Activated CD4-positive, alpha-beta T cell treated with anti-CD3 and anti-CD28 coated beads for 36 hours (primary cell): ENCODE measurements at regions of chr16 and their contacts with region 1.

Region 1: DNA sequence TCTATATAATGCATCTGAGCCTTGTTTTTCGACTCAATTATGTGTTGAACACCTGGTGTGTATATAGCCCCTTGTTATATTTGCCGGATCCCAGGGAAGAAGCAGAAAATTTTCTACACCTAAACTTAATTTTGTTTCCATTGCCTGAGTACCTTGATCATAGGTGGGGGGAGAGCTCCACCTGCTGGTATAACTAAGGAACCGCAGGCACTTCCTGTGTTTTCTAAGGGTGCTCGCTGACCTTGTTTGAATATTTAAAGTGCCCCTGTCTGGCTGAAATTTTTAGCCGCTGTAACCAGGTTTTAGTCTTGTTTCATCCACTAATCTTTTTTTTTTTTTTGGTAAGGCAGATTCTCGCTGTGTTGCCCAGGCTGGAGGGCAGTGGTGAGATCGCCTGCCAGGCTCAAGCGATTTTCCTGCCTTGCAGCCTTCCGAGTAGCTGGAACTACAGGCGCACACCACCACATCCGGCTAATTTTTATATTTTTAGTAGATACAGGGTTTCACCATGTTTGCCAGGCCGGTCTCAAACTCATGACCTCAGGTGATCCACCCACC is 6.5 kb upstream of the NUBP1 start:
- DNase-seq: peak; percentile 77
- ATAC-seq: peak; percentile 46
- H3K4me3 Mint-ChIP-seq: peak overlapping the region; percentile 36
- H3K27ac Mint-ChIP-seq: no peak overlapping the region
- H3K4me1 Mint-ChIP-seq: peaks cover 29% of the 10 kb centered on the region
- H3K27me3 Mint-ChIP-seq: no peaks in the 10 kb centered on the region

Region 2: DNA sequence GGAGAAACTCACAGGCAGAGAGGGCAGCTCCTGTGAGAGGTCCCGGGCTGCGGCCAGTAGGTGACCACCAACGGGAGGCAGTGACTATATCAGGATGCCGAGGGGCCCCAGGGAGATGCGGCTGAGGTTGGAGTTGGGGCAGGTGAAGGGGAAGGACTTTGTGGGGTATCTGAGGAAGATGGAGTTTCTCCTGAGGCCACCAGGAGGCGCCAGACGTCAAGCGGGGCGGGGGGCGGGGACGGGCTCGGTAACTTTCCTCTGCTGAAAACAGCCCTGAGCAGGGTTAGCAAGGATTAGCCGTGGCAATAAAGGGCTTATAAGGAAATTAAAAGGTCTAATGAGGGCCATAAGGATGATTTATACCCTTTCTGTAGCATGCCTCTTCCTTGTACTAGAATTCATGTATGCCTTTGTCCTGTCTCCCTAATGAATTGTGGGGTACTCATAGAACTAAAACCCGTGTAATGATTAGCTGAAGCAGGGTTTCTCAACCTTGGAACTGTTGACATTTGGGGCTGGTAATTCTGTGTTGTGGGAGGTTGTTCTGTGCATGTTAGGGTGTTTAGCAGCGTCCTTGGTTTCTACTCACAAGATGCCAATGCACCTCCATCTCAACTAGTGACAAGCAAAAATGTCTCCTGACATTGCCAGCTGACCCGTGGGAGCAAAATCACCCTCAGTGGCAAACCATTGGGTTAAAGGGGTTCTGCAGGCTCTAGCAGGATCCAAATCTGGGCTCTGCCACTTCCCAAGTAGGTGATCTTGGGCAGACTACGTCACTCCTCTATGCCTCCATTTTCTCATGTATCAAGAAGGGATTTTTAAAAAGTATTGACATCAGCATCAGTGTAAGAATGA is 480.1 kb before region 1 on chr16:
- CTCF ChIA-PET with region 1: no interaction called
- POLR2A ChIA-PET with region 1: no interaction called
- intact Hi-C with region 1: loop called (anchors 1 to 2 kb)
- DNase-seq: peak; percentile 66
- ATAC-seq: peak; percentile 63
- H3K4me3 Mint-ChIP-seq: no peak overlapping the region
- H3K27ac Mint-ChIP-seq: no peak overlapping the region
- H3K4me1 Mint-ChIP-seq: peaks cover 5% of the 10 kb centered on the region
- H3K27me3 Mint-ChIP-seq: no peaks in the 10 kb centered on the region

Region 3: DNA sequence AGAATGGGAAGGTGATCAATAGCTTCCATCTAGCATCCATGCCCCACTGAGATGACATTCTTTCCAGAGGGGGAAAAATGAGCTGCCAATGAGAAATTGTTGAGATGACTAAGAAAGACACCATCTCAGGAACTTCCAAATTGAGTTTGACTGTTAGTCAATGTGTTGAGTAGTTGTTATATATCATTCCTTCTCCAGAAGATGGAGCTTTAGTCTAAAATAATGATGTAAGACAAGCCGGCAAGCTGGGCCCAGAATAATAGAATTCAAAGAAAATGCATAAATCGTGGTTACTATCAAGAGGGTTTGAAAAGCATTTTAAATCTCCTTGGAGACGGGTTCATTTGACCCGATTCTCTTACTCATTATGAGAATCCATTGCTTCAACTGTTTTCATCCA is 422.3 kb before region 1 on chr16:
- CTCF ChIA-PET with region 1: interaction called, 3 read pairs
- POLR2A ChIA-PET with region 1: no interaction called
- intact Hi-C with region 1: loop called (anchors 2 to 10 kb)
- DNase-seq: peak; percentile 8
- ATAC-seq: peak; percentile 69
- H3K4me3 Mint-ChIP-seq: no peak overlapping the region
- H3K27ac Mint-ChIP-seq: no peak overlapping the region
- H3K4me1 Mint-ChIP-seq: peaks cover 12% of the 10 kb centered on the region
- H3K27me3 Mint-ChIP-seq: no peaks in the 10 kb centered on the region

Region 4: DNA sequence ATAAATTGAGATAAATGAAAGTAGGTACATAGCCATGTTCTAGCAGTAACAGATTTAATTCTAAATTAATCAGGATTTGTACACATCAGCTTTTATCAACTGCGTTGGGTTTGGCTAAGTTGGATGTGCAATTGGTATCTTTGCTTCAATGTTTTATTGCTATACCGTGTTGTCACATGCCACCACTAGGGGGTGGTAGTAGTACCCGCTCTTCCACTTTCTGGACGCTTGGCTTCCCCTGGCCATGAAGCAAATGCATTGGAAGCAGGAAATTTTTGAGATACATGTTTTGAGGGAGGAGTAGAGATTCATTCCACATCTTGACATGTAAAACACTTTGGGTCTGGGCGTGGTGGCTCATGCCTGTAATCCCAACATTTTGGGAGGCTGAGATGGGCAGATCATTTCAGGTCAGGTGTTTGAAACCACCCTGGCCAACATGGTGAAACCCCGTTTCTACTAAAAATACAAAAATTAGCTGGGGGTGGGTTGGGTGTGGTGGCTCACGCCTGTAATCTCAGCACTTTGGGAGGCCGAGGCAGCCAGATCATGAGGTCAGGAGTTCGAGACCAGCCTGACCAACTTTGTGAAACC is 215.4 kb before region 1 on chr16:
- CTCF ChIA-PET with region 1: interaction called, 8 read pairs
- POLR2A ChIA-PET with region 1: no interaction called
- intact Hi-C with region 1: loop called in 1 of 2 experiments (anchors 1 kb)
- DNase-seq: peak; percentile 66
- ATAC-seq: peak; percentile 68
- H3K4me3 Mint-ChIP-seq: no peak overlapping the region
- H3K27ac Mint-ChIP-seq: no peak overlapping the region
- H3K4me1 Mint-ChIP-seq: peaks cover 2% of the 10 kb centered on the region
- H3K27me3 Mint-ChIP-seq: peaks cover 3% of the 10 kb centered on the region

Region 5: GRCh38 chr16:10668322-10669045 is 68.7 kb before region 1 on chr16:
- CTCF ChIA-PET with region 1: interaction called, 7 read pairs
- POLR2A ChIA-PET with region 1: no interaction called
- intact Hi-C with region 1: loop called in 1 of 2 experiments (anchors 1 kb)
- DNase-seq: peak; percentile 29
- ATAC-seq: no peak
- H3K4me3 Mint-ChIP-seq: no peak overlapping the region
- H3K27ac Mint-ChIP-seq: no peak overlapping the region
- H3K4me1 Mint-ChIP-seq: no peaks in the 10 kb centered on the region
- H3K27me3 Mint-ChIP-seq: no peaks in the 10 kb centered on the region

Region 6: DNA sequence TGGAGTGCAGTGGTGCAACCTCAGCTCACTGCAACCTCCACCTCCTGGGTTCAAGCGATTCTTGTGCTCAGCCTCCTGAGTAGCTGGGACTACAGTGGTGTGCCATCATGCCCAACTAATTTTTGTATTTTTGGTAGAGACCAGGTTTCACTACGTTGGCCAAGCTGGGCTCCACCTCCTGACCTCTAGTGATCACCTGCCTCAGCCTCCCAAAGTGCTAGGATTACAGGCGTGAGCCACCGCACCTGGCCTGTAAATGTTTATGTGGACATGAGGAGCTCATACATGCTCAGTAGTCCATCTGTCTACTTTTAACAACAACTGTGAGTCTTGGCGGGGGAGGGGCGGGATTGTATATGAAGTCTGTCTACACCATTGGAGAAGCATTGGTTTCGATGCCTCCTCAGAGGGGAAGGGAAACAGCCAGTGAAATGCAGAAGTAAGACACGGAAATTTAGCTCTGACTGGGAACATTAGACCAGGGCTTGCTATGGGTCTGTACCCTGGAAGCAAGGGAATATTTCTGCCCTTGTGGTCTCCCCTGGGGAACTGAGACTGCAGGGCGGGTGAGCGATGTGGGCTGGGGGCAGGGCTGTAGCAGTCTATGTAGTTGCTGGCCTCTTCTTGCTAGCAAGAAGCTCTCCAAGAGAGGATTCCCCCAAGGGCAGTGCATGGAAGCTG is 15.8 kb after region 1 on chr16:
- CTCF ChIA-PET with region 1: interaction called, 7 read pairs
- POLR2A ChIA-PET with region 1: no interaction called
- intact Hi-C with region 1: loop called in 1 of 2 experiments (anchors 2 kb)
- DNase-seq: peak; percentile 29
- ATAC-seq: no peak
- H3K4me3 Mint-ChIP-seq: no peak overlapping the region
- H3K27ac Mint-ChIP-seq: no peak overlapping the region
- H3K4me1 Mint-ChIP-seq: peaks cover 36% of the 10 kb centered on the region
- H3K27me3 Mint-ChIP-seq: no peaks in the 10 kb centered on the region

Region 7: GRCh38 chr16:10871149-10871991 is 134.2 kb after region 1 on chr16:
- CTCF ChIA-PET with region 1: no interaction called
- POLR2A ChIA-PET with region 1: no interaction called
- intact Hi-C with region 1: loop called (anchors 2 kb)
- DNase-seq: peak; percentile 87
- ATAC-seq: peak; percentile 92
- H3K4me3 Mint-ChIP-seq: peak overlapping the region; percentile 7
- H3K27ac Mint-ChIP-seq: peak overlapping the region; percentile 71
- H3K4me1 Mint-ChIP-seq: peaks cover 51% of the 10 kb centered on the region
- H3K27me3 Mint-ChIP-seq: peaks cover 43% of the 10 kb centered on the region